ENCODE measurements at regions of chr4 and their contacts with region 1.

Region 1: GRCh38 chr4:185165605-185166063 is 22.6 kb downstream of the SLC25A4 start:
- DNase-seq: no peak
- H3K4me3 Mint-ChIP-seq: no peak overlapping the region
- H3K27ac Mint-ChIP-seq: peak overlapping the region; percentile 30
- H3K4me1 Mint-ChIP-seq: peaks cover 17% of the 10 kb centered on the region
- H3K27me3 Mint-ChIP-seq: peaks cover 19% of the 10 kb centered on the region

Region 2: DNA sequence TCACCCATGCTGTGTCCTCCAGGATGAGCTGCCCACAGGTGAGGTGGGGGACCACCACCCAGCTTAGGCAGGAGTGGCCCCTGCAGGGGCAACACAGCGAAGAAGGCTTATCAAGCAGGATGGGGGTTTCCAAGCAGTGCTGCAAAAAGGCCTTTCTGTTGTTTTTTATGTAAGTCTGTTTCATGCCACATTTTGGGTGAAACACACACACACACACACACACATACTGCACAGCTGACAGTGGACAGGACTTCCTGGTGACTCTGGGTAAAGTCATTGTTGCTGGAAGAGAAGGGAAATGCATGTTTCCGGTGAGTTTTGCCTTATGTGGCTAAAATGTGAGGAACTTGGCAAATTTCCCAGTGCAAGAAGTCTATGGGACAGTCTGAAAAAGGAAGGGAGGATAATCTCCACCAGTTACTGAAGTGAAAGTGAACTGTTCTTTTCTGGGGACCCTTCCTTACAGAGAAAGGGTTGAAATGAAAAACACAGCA is 810.5 kb before region 1 on chr4:
- intact Hi-C with region 1: no loop called
- DNase-seq: no peak
- H3K4me3 Mint-ChIP-seq: no peak overlapping the region
- H3K27ac Mint-ChIP-seq: no peak overlapping the region
- H3K4me1 Mint-ChIP-seq: peaks cover 14% of the 10 kb centered on the region
- H3K27me3 Mint-ChIP-seq: no peaks in the 10 kb centered on the region

Region 3: DNA sequence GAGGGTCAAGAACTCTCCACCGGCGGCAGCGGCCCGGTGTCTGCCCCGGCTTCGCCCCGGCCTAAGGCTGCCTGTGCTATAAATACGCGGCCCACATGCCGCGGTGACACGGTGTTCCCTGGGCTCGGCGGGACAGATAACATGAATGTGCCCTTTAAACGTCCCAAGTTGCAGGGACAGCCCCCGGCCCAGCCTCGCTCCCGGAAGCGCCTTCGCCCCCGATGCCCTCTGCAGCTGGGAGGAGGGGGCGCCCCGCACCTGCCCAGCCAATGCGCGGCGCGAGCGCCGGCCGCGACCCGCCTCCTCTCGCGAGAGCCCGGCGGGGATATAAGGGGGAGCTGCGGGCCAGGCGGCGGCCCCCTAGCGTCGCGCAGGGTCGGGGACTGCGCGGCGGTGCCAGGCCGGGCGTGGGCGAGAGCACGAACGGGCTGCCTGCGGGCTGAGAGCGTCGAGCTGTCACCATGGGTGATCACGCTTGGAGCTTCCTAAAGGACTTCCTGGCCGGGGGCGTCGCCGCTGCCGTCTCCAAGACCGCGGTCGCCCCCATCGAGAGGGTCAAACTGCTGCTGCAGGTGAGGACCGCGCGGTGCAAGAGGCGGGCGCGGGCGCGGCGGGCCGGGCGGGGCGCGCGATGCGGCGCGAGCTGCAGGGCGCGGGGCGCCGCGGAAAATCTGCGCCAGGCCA is 22.6 kb before region 1 on chr4 and contains the start of gene SLC25A4:
- intact Hi-C with region 1: loop called (anchors 2 kb)
- DNase-seq: peak; percentile 61
- H3K4me3 Mint-ChIP-seq: peak within 1 kb of the TSS; percentile 83
- H3K27ac Mint-ChIP-seq: no peak within 1 kb of the TSS
- H3K4me1 Mint-ChIP-seq: peaks cover 4% of the 10 kb centered on the region
- H3K27me3 Mint-ChIP-seq: peaks cover 64% of the 10 kb centered on the region
- total RNA-seq, gene SLC25A4: 5.0 and 6.0 TPM in 2 replicates

Region 4: DNA sequence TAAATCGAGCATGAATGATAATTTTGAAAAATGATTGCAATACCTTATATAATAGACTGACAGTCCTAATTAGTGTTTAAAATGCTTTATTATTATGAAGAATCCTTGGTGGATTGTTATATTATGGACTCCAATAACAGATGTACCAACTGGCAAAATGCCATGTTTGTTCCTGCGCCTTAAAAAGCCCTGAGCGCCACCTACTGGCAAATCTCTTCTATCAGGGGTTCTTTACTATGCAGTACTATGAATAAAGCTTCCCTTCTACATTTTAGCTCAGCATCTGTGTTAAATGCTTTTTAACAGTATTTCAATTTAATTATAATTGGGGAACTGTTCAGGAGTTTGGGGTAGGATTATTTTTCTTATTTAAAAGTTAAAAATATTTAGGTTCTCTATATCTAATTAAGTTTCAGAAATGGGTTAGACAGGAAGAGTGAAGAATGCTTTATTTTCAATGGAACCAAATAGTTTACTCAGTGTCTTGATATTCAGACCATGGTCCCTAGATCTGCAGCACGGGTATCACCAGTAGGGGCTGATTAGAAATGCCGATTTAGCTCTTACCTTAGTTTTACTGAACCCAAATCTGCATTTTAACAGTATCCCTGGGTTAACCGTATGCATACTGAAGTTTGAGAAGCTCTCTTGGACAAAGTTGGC is 18.1 kb after region 1 on chr4:
- intact Hi-C with region 1: loop called (anchors 1 kb)
- DNase-seq: peak; percentile 49
- H3K4me3 Mint-ChIP-seq: no peak overlapping the region
- H3K27ac Mint-ChIP-seq: no peak overlapping the region
- H3K4me1 Mint-ChIP-seq: peaks cover 14% of the 10 kb centered on the region
- H3K27me3 Mint-ChIP-seq: no peaks in the 10 kb centered on the region

Region 5: GRCh38 chr4:185203486-185204237 is 38.0 kb after region 1 on chr4 and contains the start of gene CFAP97:
- intact Hi-C with region 1: loop called (anchors 2 kb)
- DNase-seq: peak; percentile 71
- H3K4me3 Mint-ChIP-seq: peak within 1 kb of the TSS; percentile 98
- H3K27ac Mint-ChIP-seq: peak within 1 kb of the TSS; percentile 99
- H3K4me1 Mint-ChIP-seq: peaks cover 30% of the 10 kb centered on the region
- H3K27me3 Mint-ChIP-seq: peaks cover 5% of the 10 kb centered on the region
- total RNA-seq, gene CFAP97: 44.1 and 46.9 TPM in 2 replicates

Measured in activated T-helper 2 cell treated with anti-CD3 and anti-CD28 coated beads, Interferon-gamma antibody, Interleukin-2, Interleukin-4, amounts not matched to agents 10 μg/mL and 5 μg/mL and 100 μg/mL, durations not matched to agents 14 hours and 24 hours and 36 hours (primary cell).